GM23248 (cell line): ENCODE measurements at regions of chr20 and their contacts with region 1.

Region 1: DNA sequence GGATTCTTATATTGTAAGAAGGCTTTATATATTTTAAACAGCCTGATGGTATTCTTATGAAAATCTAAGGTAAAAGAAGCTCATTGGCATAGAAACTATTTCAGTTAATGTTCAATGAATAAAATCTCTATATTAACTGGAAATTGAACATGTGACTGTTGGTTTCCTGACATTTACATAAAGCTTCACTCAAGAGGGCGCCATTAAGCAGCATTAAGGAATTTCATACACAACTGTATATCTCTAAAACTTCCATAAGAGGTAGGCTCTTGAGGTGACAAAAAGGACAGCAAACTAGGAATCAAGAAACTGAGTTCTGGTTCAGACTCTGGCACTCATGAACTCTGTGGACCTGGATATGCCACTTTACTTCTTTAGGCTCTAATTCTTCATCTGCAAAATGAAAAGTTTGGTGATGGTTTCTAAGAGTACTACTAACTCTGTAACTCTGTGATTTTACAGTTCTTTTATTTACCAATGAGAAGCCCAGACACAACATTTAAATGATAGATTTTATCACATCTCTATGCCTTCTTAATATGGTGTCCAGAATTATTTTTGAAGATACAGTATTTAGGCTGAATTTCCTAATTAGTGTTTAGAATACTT is 147.5 kb downstream of the FLRT3 start:
- DNase-seq: peak; percentile 70
- H3K4me3 ChIP-seq: no peak overlapping the region
- H3K27ac ChIP-seq: no peak overlapping the region
- H3K4me1 ChIP-seq: no peaks in the 10 kb centered on the region; the same call in 1 of the 2 replicates
- H3K27me3 ChIP-seq: no peaks in the 10 kb centered on the region

Region 2: DNA sequence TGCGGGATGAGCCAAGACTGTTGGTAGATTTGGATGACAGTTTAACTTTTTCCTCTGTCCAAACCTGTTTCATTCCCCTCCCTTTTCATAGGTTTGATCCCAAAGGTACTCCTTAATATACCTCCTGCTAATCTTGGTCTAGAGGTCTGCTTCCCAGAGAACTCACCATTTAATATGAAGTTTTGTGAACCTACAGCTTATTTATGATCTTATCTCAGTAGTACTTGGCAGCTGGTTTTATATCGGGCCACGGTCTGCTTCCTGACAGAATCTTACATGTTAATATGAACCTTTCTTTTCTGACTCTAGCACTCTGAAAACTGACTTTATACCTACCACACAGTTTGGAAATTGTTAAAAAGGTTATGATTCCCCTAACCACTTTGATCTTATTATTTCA is 55.9 kb before region 1 on chr20:
- in situ Hi-C with region 1: no loop called
- DNase-seq: no peak
- H3K4me3 ChIP-seq: no peak overlapping the region
- H3K27ac ChIP-seq: no peak overlapping the region
- H3K4me1 ChIP-seq: no peaks in the 10 kb centered on the region
- H3K27me3 ChIP-seq: no peaks in the 10 kb centered on the region

Region 3: GRCh38 chr20:14264869-14265268 is 75.0 kb after region 1 on chr20:
- in situ Hi-C with region 1: loop called (anchors 5 kb)
- DNase-seq: peak; percentile 63
- H3K4me3 ChIP-seq: no peak overlapping the region
- H3K27ac ChIP-seq: no peak overlapping the region
- H3K4me1 ChIP-seq: peaks cover 7% of the 10 kb centered on the region
- H3K27me3 ChIP-seq: no peaks in the 10 kb centered on the region

Region 4: DNA sequence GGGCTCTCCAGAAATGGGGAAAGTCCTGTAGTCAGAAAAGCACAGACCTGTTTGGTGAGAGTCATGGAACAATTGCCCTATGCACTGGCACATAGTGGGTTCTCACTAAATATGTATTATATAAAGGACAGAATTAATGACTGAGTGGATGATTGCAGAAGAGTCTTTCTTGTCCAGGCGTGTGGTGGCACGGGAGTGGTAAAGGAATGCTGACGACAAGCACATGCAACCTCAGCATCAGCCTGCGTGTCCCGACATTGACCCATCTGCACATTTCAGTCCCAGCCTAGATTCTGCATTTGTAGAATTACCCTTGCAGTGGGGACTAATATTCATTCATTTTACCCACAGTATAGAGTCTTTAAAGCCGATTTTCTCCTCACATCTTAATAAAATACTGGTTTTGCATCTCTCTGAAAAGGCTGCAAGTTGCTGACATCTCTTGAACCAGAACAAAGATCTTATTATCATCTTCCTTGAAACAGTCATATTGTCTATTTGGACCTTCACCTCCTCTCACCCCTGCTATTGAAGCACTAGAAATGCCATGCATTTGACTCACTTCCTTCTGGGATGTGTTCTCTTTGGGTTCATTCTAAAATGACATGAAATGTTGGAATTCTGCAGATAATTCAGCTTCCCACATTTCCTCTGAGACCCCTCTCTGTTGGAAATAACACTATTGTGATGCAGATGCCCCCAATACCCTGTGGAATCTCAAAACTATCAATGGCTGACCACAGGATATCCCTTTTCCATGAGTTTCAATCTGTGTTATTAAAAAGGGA is 1031.1 kb after region 1 on chr20:
- in situ Hi-C with region 1: no loop called
- DNase-seq: peak; percentile 50
- H3K4me3 ChIP-seq: no peak overlapping the region
- H3K27ac ChIP-seq: peak overlapping the region; percentile 34
- H3K4me1 ChIP-seq: peaks cover 22% of the 10 kb centered on the region
- H3K27me3 ChIP-seq: no peaks in the 10 kb centered on the region